ENCODE measurements at regions of chr11 and their contacts with region 1.

Region 1: DNA sequence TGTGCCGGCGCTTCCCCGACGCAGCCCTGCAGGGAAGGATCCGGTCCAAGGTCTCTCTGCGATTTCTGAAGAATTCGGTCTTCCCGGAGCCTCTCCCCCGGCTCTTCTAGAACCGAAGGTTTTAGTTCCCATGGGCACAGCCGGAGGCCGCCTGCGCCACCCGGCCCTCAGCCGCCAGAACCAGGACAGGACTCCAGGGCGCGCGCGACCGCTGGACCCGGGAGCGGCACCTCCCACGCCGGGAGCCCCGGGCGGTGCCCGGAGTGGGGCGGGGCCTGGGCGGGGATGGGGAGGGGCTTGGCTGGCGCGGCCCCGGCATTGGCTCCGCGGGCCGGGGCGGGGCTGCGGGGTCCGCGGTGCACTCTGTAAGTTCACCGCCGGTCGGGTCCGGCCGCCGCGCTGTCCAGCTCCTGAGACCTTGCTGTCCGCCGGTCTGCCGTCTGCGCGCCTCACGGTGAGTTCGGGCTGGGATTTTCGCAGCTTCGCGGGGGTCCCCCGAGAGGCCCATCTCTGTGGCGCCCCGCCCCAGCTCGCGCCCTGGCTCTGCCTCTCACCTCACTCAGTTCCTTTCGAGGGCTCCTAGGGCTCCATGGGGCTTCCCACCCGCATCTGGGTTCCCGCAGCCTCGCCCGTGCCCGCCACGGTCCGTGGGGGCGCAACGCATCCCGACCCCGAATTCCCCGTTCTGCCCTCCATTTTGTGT is at the start of gene CDC42EP2:
- DNase-seq: peak; percentile 45 to 83 (median 72)
- ATAC-seq: peak; percentile 90
- H3K4me3 ChIP-seq: peak within 1 kb of the TSS; percentile 73 to 81
- H3K4me3 Mint-ChIP-seq: peak within 1 kb of the TSS; percentile 80
- H3K27ac ChIP-seq: no peak within 1 kb of the TSS
- H3K27ac Mint-ChIP-seq: no peak within 1 kb of the TSS
- H3K4me1 ChIP-seq: peaks cover 15% of the 10 kb centered on the region
- H3K4me1 Mint-ChIP-seq: peaks cover 7% of the 10 kb centered on the region
- H3K27me3 ChIP-seq: peaks cover 0 to 5% of the 10 kb centered on the region in 2 experiments
- H3K27me3 Mint-ChIP-seq: no peaks in the 10 kb centered on the region
- CTCF ChIP-seq: no peak
- total RNA-seq, gene CDC42EP2: 0.67 to 0.76 TPM

Region 2: DNA sequence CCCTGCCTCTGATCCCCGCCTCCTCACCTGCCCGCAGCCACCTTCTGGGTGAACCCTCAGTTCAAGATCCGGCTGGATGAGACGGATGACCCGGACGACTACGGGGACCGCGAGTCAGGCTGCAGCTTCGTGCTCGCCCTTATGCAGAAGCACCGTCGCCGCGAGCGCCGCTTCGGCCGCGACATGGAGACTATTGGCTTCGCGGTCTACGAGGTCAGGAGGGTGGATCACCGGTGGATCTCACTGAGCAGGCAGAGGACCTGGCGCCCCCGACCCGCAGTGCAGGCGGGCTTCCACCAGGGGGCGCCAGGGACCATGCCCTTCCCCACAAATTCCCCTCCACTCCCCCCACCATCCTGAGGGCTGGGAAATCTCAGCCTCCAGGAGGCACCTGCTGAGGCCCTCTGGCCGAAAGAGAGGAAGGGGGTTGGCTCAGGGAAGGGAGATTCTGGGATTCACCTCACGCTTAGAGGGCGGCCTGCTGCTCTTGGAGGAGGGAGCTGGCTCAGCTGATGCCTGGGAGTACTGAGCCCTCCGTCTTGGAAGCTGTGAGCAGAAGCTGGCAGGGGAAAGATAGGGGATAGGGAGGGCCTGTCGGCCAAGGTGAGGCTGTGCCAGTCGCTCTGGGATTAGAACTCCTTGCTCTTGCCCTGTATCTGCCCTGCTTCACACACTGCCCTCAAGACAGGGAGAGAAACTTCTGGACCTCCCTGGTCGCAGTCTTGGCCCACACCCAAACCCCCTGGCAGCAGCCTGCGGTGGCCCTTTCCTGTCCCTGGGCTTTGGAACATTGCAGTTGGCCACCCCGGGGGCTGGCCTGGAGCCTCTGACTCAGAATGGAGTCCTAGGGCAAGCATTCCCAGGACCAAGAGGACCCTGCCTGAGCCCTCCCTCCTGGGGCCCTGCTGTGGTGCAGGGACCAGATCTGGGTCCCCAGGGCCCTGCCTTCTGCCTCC is 109.7 kb before region 1 on chr11:
- CTCF ChIA-PET with region 1: interaction called, 51 read pairs
- POLR2A ChIA-PET with region 1: no interaction called
- intact Hi-C with region 1: loop called (anchors 1 kb)
- DNase-seq: peak in 7 of 9 experiments; percentile 16 to 66 (median 63)
- ATAC-seq: peak; percentile 75
- H3K4me3 ChIP-seq: no peak overlapping the region
- H3K4me3 Mint-ChIP-seq: no peak overlapping the region
- H3K27ac ChIP-seq: no peak overlapping the region
- H3K27ac Mint-ChIP-seq: no peak overlapping the region
- H3K4me1 ChIP-seq: no peaks in the 10 kb centered on the region
- H3K4me1 Mint-ChIP-seq: peaks cover 4% of the 10 kb centered on the region
- H3K27me3 ChIP-seq: no peaks in the 10 kb centered on the region
- H3K27me3 Mint-ChIP-seq: no peaks in the 10 kb centered on the region
- CTCF ChIP-seq: peak; percentile 93

Region 3: DNA sequence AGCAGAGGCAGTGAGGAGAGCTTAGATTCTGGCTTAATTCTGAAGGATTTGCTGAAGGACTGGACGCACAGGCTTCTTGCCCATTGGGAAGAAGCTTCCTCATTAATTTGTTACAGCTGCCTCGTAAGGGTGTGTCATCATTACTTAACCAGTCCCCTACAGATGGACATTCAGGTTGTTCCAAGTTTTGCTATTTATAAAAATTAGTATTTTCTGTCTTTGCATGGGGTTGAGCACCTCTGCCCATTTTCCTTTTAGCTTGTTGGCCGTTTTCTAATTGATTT is 94.8 kb before region 1 on chr11:
- CTCF ChIA-PET with region 1: interaction called, 110 read pairs
- POLR2A ChIA-PET with region 1: interaction called, 4 read pairs
- intact Hi-C with region 1: loop called (anchors 1 kb)
- DNase-seq: no peak
- ATAC-seq: no peak
- H3K4me3 ChIP-seq: no peak overlapping the region
- H3K4me3 Mint-ChIP-seq: no peak overlapping the region
- H3K27ac ChIP-seq: no peak overlapping the region
- H3K27ac Mint-ChIP-seq: no peak overlapping the region
- H3K4me1 ChIP-seq: peaks cover under 1% of the 10 kb centered on the region
- H3K4me1 Mint-ChIP-seq: peaks cover 16% of the 10 kb centered on the region
- H3K27me3 ChIP-seq: peaks cover 0 to 1% of the 10 kb centered on the region in 2 experiments
- H3K27me3 Mint-ChIP-seq: no peaks in the 10 kb centered on the region
- CTCF ChIP-seq: no peak

Region 4: GRCh38 chr11:65261591-65262380 is 52.9 kb before region 1 on chr11 and contains the start of gene POLA2:
- CTCF ChIA-PET with region 1: interaction called, 16 read pairs
- POLR2A ChIA-PET with region 1: interaction called, 8 read pairs
- intact Hi-C with region 1: loop called in 1 of 2 experiments (anchors 5 kb)
- DNase-seq: peak; percentile 90 to 99 (median 95)
- ATAC-seq: peak; percentile 95
- H3K4me3 ChIP-seq: peak within 1 kb of the TSS; percentile 79 to 85
- H3K4me3 Mint-ChIP-seq: peak within 1 kb of the TSS; percentile 93
- H3K27ac ChIP-seq: peak within 1 kb of the TSS; percentile 85 to 93
- H3K27ac Mint-ChIP-seq: peak within 1 kb of the TSS; percentile 95
- H3K4me1 ChIP-seq: peaks cover 14% of the 10 kb centered on the region
- H3K4me1 Mint-ChIP-seq: peaks cover 43% of the 10 kb centered on the region
- H3K27me3 ChIP-seq: no peaks in the 10 kb centered on the region
- H3K27me3 Mint-ChIP-seq: no peaks in the 10 kb centered on the region
- CTCF ChIP-seq: no peak
- total RNA-seq, gene POLA2: 8.5 to 9.3 TPM

Region 5: GRCh38 chr11:65291613-65292012 is 23.0 kb before region 1 on chr11:
- CTCF ChIA-PET with region 1: interaction called, 19 read pairs
- POLR2A ChIA-PET with region 1: interaction called, 3 read pairs
- intact Hi-C with region 1: no loop called
- DNase-seq: no peak
- ATAC-seq: no peak
- H3K4me3 ChIP-seq: no peak overlapping the region
- H3K4me3 Mint-ChIP-seq: no peak overlapping the region
- H3K27ac ChIP-seq: no peak overlapping the region
- H3K27ac Mint-ChIP-seq: no peak overlapping the region
- H3K4me1 ChIP-seq: no peaks in the 10 kb centered on the region
- H3K4me1 Mint-ChIP-seq: no peaks in the 10 kb centered on the region
- H3K27me3 ChIP-seq: no peaks in the 10 kb centered on the region
- H3K27me3 Mint-ChIP-seq: no peaks in the 10 kb centered on the region
- CTCF ChIP-seq: no peak

Region 6: GRCh38 chr11:65382033-65382807 is 67.6 kb after region 1 on chr11 and contains the start of gene SLC25A45:
- CTCF ChIA-PET with region 1: no interaction called
- POLR2A ChIA-PET with region 1: no interaction called
- intact Hi-C with region 1: no loop called
- DNase-seq: peak; percentile 77 to 96 (median 92)
- ATAC-seq: peak; percentile 83
- H3K4me3 ChIP-seq: peak within 1 kb of the TSS; percentile 60 to 98
- H3K4me3 Mint-ChIP-seq: peak within 1 kb of the TSS; percentile 87
- H3K27ac ChIP-seq: peak within 1 kb of the TSS; percentile 97 to 100
- H3K27ac Mint-ChIP-seq: peak within 1 kb of the TSS; percentile 99
- H3K4me1 ChIP-seq: peaks cover 54% of the 10 kb centered on the region
- H3K4me1 Mint-ChIP-seq: peaks cover 42% of the 10 kb centered on the region
- H3K27me3 ChIP-seq: no peaks in the 10 kb centered on the region
- H3K27me3 Mint-ChIP-seq: no peaks in the 10 kb centered on the region
- CTCF ChIP-seq: peak; percentile 81
- total RNA-seq, gene SLC25A45: 27.8 to 29.6 TPM

Measured in CD8-positive, alpha-beta T cell (primary cell).